Left ventricle myocardium superior (tissue), 1 donor: ENCODE measurements at regions of chr4 and their contacts with region 1.

Region 1: DNA sequence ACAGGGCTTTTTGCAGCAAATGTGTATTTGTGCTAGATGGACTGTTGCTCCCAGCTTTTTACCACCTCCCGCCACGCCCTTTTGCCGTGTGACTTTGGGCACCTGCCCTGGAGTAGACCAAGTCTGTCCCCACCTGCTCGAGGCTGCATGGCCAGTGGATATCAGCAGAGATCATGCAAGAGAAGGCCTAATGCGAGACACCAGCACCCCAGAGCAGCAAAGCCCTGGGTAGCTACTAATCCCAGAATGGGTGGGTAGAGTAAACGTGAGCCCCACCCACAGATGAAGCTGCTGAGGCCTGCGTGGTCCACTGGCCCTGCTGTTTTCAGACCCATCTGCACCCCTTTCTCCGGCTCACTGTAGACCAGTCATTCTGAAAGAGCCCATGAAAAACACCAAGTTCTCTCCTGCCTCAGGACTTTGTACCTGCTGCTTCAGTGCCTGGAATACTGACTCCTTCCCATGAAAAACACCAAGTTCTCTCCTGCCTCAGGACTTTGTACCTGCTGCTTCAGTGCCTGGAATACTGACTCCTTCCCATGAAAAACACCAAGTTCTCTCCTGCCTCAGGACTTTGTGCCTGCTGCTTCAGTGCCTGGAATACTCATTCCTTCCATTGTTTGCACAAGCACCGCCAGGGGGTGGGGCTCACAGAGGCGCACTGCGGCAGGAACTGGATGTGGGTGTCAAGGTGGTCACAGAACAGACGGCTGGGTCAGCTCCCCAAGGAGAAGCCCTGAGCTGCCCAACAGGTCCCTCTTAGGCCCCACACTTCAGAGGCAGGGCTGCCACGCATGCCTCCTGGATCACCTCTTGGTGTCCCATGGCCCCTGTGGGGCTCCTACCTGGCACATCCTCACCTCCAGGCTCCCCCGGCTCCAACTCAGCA is 5.1 kb upstream of the TNIP2 start:
- DNase-seq: no peak
- ATAC-seq: no peak

Region 2: DNA sequence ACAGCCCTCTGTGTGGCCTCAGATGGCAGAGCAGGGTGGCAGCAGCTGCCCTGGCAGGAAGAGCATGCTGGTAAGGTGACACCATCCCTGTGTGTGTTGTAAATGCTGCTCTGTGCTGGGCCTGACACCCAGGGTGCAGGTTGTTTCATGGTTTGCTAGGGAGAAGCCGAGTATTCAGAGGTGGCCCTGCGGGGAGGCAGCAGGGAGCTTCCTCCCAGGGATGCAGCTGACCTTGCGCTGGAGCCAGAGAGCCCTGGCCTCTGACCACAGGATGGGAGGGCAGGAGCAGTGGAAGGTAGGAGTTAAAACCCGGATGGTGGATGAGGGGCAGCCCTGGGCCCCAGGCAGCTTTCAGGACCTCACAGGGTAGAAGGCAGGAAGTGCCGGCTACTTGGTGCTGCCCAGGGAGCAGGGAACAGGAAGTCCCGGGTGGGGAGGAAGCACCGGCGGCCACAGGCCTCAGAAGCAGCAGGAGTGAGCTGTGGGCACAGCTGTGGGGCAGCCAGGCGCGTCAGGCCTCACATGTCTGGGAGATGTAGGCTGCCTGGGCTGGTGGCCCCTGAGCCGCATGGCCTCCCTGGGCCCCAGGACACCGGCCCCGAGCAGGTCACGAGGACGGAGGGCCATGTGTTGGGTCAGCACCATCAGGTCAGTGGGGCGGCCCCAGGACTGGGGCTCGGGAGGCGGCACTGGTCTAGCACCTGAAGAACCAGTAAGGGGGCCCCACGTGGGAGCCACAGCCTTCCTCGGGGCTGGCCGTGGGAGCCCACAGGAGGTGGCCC is 50.7 kb after region 1 on chr4:
- intact Hi-C with region 1: loop called (anchors 10 kb)
- DNase-seq: peak; percentile 86
- ATAC-seq: peak; percentile 74